ENCODE measurements at regions of chr2 and their contacts with region 1.

Region 1: DNA sequence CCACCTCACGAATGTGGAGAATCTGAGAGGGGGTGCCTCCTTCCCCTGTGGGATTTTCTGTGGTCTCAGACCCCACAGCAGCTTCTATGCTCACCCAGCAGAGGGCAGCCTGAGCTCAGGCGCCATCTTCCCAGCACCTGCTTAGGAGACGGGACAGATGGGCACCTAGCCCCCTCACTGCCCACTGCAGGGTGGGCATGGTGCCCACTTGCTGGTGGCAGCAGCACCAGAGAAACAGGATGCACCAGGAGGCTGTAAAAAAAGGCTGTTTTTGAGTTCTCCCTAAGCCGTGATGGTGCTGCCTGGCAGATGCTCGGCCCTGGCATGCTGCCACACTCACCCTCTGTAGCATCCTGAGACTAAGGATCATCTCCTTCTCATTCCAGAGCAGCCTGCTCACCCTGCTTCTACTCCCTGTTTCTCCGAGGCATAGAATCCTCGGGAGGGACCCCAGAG is 19.1 kb upstream of the SLC20A1 start:
- DNase-seq: peak; percentile 72
- ATAC-seq: peak; percentile 83 to 84
- H3K4me3 ChIP-seq: peak overlapping the region; percentile 12
- H3K27ac ChIP-seq: peak overlapping the region; percentile 76
- H3K4me1 ChIP-seq: peaks cover 38% of the 10 kb centered on the region
- H3K27me3 ChIP-seq: no peaks in the 10 kb centered on the region
- CTCF ChIP-seq: peak; percentile 84

Region 2: GRCh38 chr2:112314856-112315255 is 311.8 kb before region 1 on chr2:
- intact Hi-C with region 1: no loop called
- DNase-seq: no peak
- ATAC-seq: no peak
- H3K4me3 ChIP-seq: no peak overlapping the region
- H3K27ac ChIP-seq: no peak overlapping the region
- H3K4me1 ChIP-seq: no peaks in the 10 kb centered on the region
- H3K27me3 ChIP-seq: no peaks in the 10 kb centered on the region
- CTCF ChIP-seq: no peak

Region 3: GRCh38 chr2:112685271-112685884 is 58.7 kb after region 1 on chr2:
- intact Hi-C with region 1: loop called (anchors 10 kb)
- DNase-seq: no peak
- ATAC-seq: no peak
- H3K4me3 ChIP-seq: no peak overlapping the region
- H3K27ac ChIP-seq: no peak overlapping the region
- H3K4me1 ChIP-seq: no peaks in the 10 kb centered on the region
- H3K27me3 ChIP-seq: no peaks in the 10 kb centered on the region
- CTCF ChIP-seq: no peak

Region 4: GRCh38 chr2:112996635-112997034 is 370.0 kb after region 1 on chr2:
- intact Hi-C with region 1: no loop called
- DNase-seq: no peak
- ATAC-seq: peak in 1 of 2 donors; percentile 13
- H3K4me3 ChIP-seq: no peak overlapping the region
- H3K27ac ChIP-seq: no peak overlapping the region
- H3K4me1 ChIP-seq: no peaks in the 10 kb centered on the region
- H3K27me3 ChIP-seq: no peaks in the 10 kb centered on the region
- CTCF ChIP-seq: no peak

Region 5: GRCh38 chr2:113173542-113174395 is 547.1 kb after region 1 on chr2 and contains the start of gene PSD4:
- intact Hi-C with region 1: no loop called
- DNase-seq: peak; percentile 88
- ATAC-seq: peak; percentile 89
- H3K4me3 ChIP-seq: peak within 1 kb of the TSS; percentile 51
- H3K27ac ChIP-seq: peak within 1 kb of the TSS; percentile 76
- H3K4me1 ChIP-seq: peaks cover 37% of the 10 kb centered on the region
- H3K27me3 ChIP-seq: no peaks in the 10 kb centered on the region
- CTCF ChIP-seq: no peak
- total RNA-seq, gene PSD4: 43.2 TPM